HepG2 (cell line): ENCODE measurements at regions of chr2 and their contacts with region 1.

Region 1: GRCh38 chr2:190819840-190820301 is 60.8 kb upstream of the GLS start:
- DNase-seq: no peak
- ATAC-seq: no peak
- H3K4me3 ChIP-seq: no peak overlapping the region
- H3K27ac ChIP-seq: no peak overlapping the region
- H3K4me1 ChIP-seq: peaks cover 18% of the 10 kb centered on the region
- H3K27me3 ChIP-seq: no peaks in the 10 kb centered on the region
- CTCF ChIP-seq: no peak
- EP300 ChIP-seq: no peak
- POLR2A ChIP-seq: no peak
- RAD21 ChIP-seq: no peak

Region 2: GRCh38 chr2:190723397-190724090 is 96.3 kb before region 1 on chr2:
- CTCF ChIA-PET with region 1: no interaction called
- POLR2A ChIA-PET with region 1: no interaction called
- in situ Hi-C with region 1: no loop called
- intact Hi-C with region 1: no loop called
- DNase-seq: no peak
- ATAC-seq: no peak
- H3K4me3 ChIP-seq: no peak overlapping the region
- H3K27ac ChIP-seq: no peak overlapping the region
- H3K4me1 ChIP-seq: no peaks in the 10 kb centered on the region
- H3K27me3 ChIP-seq: peaks cover 0 to 17% of the 10 kb centered on the region in 2 experiments; a peak in 3 of 5 replicates
- CTCF ChIP-seq: no peak
- EP300 ChIP-seq: no peak
- POLR2A ChIP-seq: no peak
- RAD21 ChIP-seq: no peak

Region 3: DNA sequence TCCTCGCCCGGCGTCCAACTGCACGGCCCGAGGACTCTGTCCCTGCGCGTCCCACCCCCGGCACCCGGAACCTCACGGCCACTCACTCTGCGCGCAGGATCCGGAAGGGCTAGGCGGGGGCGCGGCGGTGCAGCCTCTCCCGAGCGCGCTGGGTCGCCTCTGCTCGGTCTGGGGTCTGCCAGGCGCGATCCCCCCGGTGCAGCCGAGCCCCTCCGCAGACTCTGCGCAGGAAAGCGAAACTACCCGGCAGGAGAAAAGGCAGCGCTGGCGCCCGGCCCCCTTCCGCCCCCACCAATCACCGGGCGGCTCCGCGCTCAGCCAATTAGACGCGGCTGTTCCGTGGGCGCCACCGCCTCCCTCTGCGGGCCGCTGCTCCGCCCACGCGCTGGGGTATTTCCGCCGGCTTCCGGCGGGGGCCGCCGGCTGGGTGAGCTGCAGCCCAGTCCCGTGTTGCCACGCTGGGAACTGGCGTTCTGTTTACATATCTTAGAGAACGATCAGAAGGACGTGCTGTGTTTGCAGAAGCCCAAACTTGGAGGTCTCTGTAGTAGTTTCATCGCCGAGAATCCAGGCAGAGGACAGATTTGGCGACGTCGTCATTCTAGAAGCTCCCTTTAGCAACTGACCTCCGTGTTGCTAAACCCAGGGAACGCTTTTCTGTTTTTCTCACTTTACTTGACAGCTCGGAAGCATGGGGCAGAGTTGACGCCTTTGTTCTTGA is 194.2 kb after region 1 on chr2 and contains the start of gene STAT1:
- CTCF ChIA-PET with region 1: no interaction called
- POLR2A ChIA-PET with region 1: no interaction called
- in situ Hi-C with region 1: no loop called
- intact Hi-C with region 1: loop called (anchors 10 kb)
- DNase-seq: peak; percentile 89
- ATAC-seq: peak; percentile 95
- H3K4me3 ChIP-seq: peak within 1 kb of the TSS; percentile 81 to 92 (median 89)
- H3K27ac ChIP-seq: peak within 1 kb of the TSS; percentile 81
- H3K4me1 ChIP-seq: peaks cover 39% of the 10 kb centered on the region
- H3K27me3 ChIP-seq: peaks cover 0 to 7% of the 10 kb centered on the region in 2 experiments; a peak in 1 of 5 replicates
- CTCF ChIP-seq: peak; percentile 27; the same call in 1 of the 2 replicates
- EP300 ChIP-seq: peak; percentile 56 to 100; a peak in 3 of 4 replicates
- POLR2A ChIP-seq: peak; percentile 95 to 96
- RAD21 ChIP-seq: peak; percentile 66
- total RNA-seq, gene STAT1: 59.6 and 90.6 TPM in 2 replicates